ENCODE measurements at regions of chr18 and their contacts with region 1.

Region 1: DNA sequence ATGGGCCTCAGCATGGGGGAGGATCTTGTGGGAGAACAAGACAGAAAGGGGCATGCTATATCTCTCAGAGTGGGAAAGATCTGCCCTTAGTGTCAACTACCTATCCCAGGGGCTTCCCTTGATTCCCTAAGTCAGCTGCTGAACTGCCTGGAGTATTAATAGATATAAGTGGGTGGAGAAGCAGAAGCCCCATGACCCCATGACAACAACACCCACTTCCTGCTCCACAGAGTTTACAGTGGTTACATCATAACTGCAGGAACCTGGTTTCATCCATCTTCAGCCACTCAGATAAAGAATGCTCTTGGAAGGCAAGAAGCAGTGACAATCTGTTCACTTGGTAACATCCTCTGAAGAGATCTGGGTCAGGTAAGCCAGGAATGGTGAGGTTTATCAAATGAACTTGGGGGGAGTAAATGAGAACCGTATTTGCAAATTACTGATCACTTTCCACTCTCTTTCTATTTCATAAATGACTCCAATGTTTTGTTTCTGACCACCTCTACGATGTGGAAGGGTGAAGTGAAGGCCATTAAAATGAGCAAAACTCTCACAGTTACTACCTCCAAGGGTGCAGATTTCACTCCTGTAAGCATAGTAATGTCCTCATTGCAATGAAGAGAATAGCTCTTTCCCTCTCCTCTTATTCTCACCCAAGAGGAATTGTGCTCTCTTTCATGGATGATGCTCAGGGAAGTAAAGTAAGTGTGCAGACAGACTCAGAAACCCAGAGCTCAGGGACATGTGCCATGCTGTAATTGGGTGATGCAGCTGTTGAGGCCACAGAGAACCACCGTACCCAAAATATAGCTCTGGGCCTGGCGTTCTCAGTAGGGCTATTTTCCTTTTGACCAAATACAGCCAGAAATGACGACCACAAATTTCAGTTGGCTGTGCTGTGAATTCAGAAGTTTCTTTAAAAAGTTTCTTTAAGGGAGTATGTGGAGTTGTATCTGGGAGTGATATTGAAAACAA is 192.8 kb upstream of the APCDD1 start:
- DNase-seq: no peak
- ATAC-seq: no peak
- H3K4me3 ChIP-seq: no peak overlapping the region
- H3K27ac ChIP-seq: no peak overlapping the region
- H3K4me1 ChIP-seq: peaks cover 4% of the 10 kb centered on the region
- H3K27me3 ChIP-seq: no peaks in the 10 kb centered on the region
- CTCF ChIP-seq: no peak
- EP300 ChIP-seq: no peak
- POLR2A ChIP-seq: no peak
- RAD21 ChIP-seq: no peak

Region 2: DNA sequence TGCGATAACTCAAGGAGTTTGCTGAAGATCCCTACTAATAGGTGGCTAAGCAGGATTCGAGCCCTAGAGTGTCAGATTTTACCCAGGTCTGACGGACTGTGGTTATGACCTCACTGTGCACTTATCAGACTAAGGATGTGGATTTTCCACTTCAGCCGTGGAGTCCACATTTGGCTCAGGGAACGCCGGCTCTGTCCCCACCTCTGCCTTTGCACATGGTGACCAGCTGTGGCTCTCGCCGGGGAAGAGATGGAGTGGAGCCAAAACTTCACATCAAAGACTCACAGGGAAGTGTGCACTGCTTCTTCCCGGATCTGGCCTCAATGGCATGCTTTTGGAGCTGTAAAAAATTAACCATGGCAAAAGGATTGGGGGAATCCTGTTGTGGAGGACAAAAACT is 56.4 kb before region 1 on chr18:
- CTCF ChIA-PET with region 1: no interaction called
- POLR2A ChIA-PET with region 1: no interaction called
- RAD21 ChIA-PET with region 1: no interaction called
- SMC1A ChIA-PET with region 1: no interaction called
- in situ Hi-C with region 1: no loop called
- intact Hi-C with region 1: loop called (anchors 10 kb)
- DNase-seq: no peak
- ATAC-seq: no peak
- H3K4me3 ChIP-seq: no peak overlapping the region
- H3K27ac ChIP-seq: no peak overlapping the region
- H3K4me1 ChIP-seq: no peaks in the 10 kb centered on the region
- H3K27me3 ChIP-seq: peaks cover 0 to 2% of the 10 kb centered on the region in 2 experiments; a peak in 1 of 4 replicates
- CTCF ChIP-seq: no peak
- EP300 ChIP-seq: no peak
- POLR2A ChIP-seq: no peak
- RAD21 ChIP-seq: no peak

Region 3: GRCh38 chr18:10560450-10561045 is 299.0 kb after region 1 on chr18:
- CTCF ChIA-PET with region 1: no interaction called
- POLR2A ChIA-PET with region 1: no interaction called
- RAD21 ChIA-PET with region 1: no interaction called
- SMC1A ChIA-PET with region 1: no interaction called
- in situ Hi-C with region 1: no loop called
- intact Hi-C with region 1: no loop called
- DNase-seq: peak; percentile 48
- ATAC-seq: peak; percentile 90
- H3K4me3 ChIP-seq: peak overlapping the region; percentile 21; the same call in 1 of the 2 replicates
- H3K27ac ChIP-seq: peak overlapping the region; percentile 66
- H3K4me1 ChIP-seq: peaks cover 5% of the 10 kb centered on the region
- H3K27me3 ChIP-seq: no peaks in the 10 kb centered on the region
- CTCF ChIP-seq: peak; percentile 69 to 80 (median 78)
- EP300 ChIP-seq: no peak
- POLR2A ChIP-seq: no peak
- RAD21 ChIP-seq: peak; percentile 89